AG04449 (cell line): ENCODE measurements at regions of chr10 and their contacts with region 1.

Region 1: DNA sequence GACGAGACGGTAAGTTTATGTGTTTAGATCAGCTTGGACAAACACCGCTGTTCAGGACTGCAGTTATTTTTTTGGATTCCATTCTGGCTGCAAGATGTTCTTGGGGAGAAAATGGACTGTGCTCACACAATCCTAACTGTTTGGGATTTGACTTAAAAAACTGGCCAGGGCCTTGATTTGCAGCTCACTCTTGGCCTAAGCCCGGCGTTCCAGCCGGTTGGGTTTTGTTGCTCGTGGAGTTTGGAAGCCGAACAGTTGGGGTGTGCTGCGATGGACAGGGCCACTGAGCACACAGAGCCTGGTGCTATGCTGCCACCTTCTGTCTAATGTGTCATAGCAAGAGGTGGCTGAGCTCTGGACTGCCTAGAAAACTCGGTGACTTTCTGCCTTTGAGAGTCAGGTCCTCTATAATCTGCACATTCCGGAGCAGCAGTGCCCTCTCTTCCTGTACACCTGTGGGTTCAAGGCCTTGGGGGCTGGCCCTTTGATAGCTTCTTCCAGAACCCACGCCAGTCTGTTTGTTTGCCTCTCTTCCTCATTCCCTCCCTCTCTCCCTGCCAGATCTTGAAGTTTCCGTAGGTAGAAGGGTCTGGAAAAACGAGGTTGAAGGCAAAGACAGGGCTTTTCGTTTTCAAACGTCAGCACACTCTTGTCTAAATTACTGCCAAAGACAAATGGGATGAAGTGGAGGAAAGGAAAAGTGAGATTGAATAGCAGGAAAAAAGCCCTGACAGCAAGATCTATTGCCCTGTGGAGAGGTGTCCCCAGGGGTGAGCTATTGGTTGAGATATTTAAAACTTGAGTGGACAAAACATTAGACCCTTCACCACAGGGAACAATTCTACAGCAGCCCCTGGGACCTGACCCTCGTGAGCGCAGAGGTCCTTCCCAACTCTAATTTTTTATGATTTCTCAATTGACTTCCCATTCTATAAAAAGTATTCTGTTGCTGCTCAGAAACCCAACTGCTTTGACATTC is 167.5 kb upstream of the HABP2 start:
- DNase-seq: peak; percentile 59
- H3K4me3 ChIP-seq: no peak overlapping the region
- CTCF ChIP-seq: peak; percentile 88

Region 2: GRCh38 chr10:112565434-112566053 is 819.8 kb before region 1 on chr10:
- CTCF ChIA-PET with region 1: interaction called, 20 read pairs
- POLR2A ChIA-PET with region 1: no interaction called
- DNase-seq: no peak
- H3K4me3 ChIP-seq: no peak overlapping the region
- CTCF ChIP-seq: peak; percentile 67

Region 3: DNA sequence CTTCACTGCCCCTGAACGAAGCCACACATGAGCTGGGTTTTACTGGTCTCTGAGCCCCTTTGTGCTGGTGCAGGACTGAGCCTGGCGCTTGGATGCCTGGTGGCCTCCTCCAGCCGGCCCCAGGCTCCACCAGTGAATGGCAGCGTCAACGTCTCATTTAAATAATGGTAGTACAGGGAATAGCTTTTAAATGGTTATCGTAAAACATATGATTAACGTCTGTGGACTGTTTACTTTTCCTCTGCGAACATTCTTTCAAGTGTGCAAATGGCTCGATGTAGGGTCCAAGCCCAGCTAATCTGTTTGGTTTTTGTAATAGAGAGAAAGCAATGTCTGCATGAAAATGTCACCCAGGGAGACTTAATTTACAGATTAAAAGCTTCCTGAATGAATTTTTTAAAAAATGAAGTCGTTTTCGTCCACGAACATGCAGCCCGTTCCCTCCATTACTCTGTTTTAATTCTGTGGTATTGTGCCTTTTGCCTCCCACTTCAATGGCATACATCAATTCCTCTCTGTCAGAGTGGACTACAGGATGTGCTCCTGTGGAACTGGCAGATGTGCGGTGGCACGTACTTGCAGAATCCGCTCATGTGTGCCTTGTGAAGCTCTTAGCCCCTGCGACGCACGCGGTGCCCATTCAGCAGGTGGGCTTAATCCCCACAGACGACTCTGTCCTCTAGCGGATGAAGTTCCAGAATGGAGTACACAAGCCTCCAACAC is 242.5 kb before region 1 on chr10:
- CTCF ChIA-PET with region 1: interaction called, 11 read pairs
- POLR2A ChIA-PET with region 1: no interaction called
- DNase-seq: no peak
- H3K4me3 ChIP-seq: no peak overlapping the region
- CTCF ChIP-seq: no peak

Region 4: GRCh38 chr10:113161066-113161465 is 224.2 kb before region 1 on chr10:
- CTCF ChIA-PET with region 1: interaction called, 13 read pairs
- POLR2A ChIA-PET with region 1: no interaction called
- DNase-seq: no peak
- H3K4me3 ChIP-seq: no peak overlapping the region
- CTCF ChIP-seq: no peak

Region 5: GRCh38 chr10:113521123-113521795 is 135.9 kb after region 1 on chr10:
- CTCF ChIA-PET with region 1: interaction called, 44 read pairs
- POLR2A ChIA-PET with region 1: no interaction called
- DNase-seq: peak; percentile 31
- H3K4me3 ChIP-seq: no peak overlapping the region
- CTCF ChIP-seq: peak; percentile 93